Naive thymus-derived CD4-positive, alpha-beta T cell (primary cell): ENCODE measurements at regions of chr22 and their contacts with region 1.

Region 1: DNA sequence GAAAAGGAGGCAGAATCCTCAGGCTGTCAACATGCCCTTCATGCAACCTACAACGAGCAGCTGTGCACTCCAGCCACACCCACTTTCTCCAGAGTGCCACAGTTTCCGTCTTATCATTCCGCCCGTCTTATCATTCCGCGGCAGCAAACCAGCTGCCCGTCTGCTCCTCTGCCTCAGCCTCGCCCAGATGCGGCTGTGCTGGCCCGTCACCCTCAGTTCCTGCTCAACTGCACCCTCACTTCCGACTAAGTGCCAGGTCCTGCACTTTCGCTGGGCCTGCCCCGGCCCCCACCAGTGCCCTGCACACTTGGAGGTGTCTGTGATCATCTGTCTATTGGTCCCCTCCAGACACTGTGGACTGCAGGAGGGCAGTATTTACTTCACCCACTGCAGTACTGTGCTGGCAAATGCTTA is 43.7 kb downstream of the MICAL3 start:
- DNase-seq: peak in 8 of 9 donors; percentile 19 to 58 (median 36)
- ATAC-seq: peak; percentile 83
- H3K4me3 ChIP-seq: peak overlapping the region; percentile 19
- H3K4me3 Mint-ChIP-seq: peak overlapping the region; percentile 71 to 92 (median 81)
- H3K27ac ChIP-seq: no peak overlapping the region
- H3K27ac Mint-ChIP-seq: peak overlapping the region; percentile 0 to 93 (median 74)
- H3K4me1 ChIP-seq: peaks cover 10 to 16% of the 10 kb centered on the region in 2 donors
- H3K4me1 Mint-ChIP-seq: peaks cover 11 to 37% (median 25%) of the 10 kb centered on the region in 7 donors
- H3K27me3 ChIP-seq: no peaks in the 10 kb centered on the region
- H3K27me3 Mint-ChIP-seq: peaks cover 0 to 4% (median 0%) of the 10 kb centered on the region in 5 donors

Region 2: DNA sequence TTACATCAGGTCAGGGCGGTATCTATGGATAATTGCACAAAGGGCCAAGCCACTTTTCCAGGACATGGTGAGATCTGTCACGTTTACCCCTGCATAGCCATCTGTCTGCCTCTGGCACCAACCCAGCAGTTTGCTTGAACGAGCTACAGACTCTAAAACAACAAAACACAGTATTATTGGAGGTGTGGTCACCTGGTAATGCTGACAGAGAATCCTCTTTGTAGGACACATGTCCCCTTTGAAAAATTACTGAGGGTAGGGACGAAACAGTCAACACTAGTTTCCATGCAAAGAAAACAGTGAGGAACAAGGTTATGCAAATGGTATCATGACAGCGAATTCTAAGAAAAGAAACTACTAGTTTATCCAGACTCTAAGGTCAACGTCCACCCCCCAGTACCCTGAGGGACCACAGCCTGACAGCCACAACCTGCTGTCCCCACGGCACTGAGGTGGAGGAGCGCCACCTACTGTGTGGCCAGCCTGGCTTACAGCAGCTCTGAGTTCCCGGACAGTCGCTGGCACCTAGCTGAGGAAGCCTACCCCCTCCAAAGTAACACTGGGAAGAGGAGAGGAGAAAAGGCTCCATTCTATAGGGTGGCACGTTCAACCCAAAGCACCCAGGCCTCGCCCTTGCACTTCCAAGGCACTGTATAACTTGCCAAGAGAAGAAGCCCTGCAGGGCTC is 89.0 kb before region 1 on chr22:
- CTCF ChIA-PET with region 1: no interaction called
- POLR2A ChIA-PET with region 1: no interaction called
- intact Hi-C with region 1: no loop called
- DNase-seq: no peak
- ATAC-seq: no peak
- H3K4me3 ChIP-seq: no peak overlapping the region
- H3K4me3 Mint-ChIP-seq: no peak overlapping the region
- H3K27ac ChIP-seq: no peak overlapping the region
- H3K27ac Mint-ChIP-seq: no peak overlapping the region
- H3K4me1 ChIP-seq: no peaks in the 10 kb centered on the region
- H3K4me1 Mint-ChIP-seq: no peaks in the 10 kb centered on the region
- H3K27me3 ChIP-seq: no peaks in the 10 kb centered on the region
- H3K27me3 Mint-ChIP-seq: no peaks in the 10 kb centered on the region

Region 3: GRCh38 chr22:18024276-18024947 is 43.8 kb after region 1 on chr22 and contains the start of gene MICAL3:
- CTCF ChIA-PET with region 1: no interaction called
- POLR2A ChIA-PET with region 1: interaction called, 3 read pairs
- intact Hi-C with region 1: loop called in 1 of 2 experiments (anchors 1 kb)
- DNase-seq: peak in 8 of 9 donors; percentile 22 to 79 (median 58)
- ATAC-seq: peak; percentile 95
- H3K4me3 ChIP-seq: peak within 1 kb of the TSS; percentile 57
- H3K4me3 Mint-ChIP-seq: peak within 1 kb of the TSS; percentile 76 to 95 (median 88)
- H3K27ac ChIP-seq: no peak within 1 kb of the TSS
- H3K27ac Mint-ChIP-seq: no peak within 1 kb of the TSS
- H3K4me1 ChIP-seq: peaks cover 0 to 4% of the 10 kb centered on the region in 2 donors
- H3K4me1 Mint-ChIP-seq: peaks cover 5 to 17% (median 10%) of the 10 kb centered on the region in 7 donors
- H3K27me3 ChIP-seq: no peaks in the 10 kb centered on the region
- H3K27me3 Mint-ChIP-seq: peaks cover 42 to 72% (median 49%) of the 10 kb centered on the region in 5 donors
- total RNA-seq, gene MICAL3: 10.0 to 43.9 (median 17.1) TPM